ENCODE measurements at regions of chr7 and their contacts with region 1.

Region 1: DNA sequence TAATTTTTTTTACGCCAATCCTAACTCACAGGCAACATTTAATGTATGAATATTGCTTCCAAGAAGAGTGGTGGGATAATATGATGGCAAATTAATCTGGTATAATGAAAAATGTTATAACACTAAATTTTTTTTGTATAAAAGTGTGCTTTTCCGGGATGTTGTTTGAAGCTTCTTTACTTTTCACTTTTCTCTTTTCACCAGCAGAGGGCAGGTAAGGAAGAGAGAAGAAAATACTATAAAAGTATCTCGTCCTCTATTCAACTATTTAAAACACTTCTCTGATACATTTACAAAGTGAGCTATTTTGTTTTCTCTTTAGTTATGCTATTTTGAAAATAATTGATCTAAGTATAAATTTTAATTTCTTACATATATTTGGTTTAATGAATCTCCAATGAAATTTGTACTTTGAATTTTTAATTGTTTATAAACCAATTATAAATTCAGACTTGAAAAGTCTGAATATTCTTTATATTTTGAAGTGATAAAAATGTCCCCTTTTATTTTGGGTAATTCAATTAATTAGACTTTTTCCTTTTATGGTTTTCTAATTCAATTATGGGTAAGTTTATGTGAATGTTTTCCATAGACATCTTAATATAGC is 20.7 kb upstream of the CFTR start:
- DNase-seq: peak in 1 of 2 experiments; percentile 17
- ATAC-seq: peak in 1 of 2 experiments; percentile 63; a peak in 2 of 6 replicates
- H3K4me3 ChIP-seq: no peak overlapping the region
- H3K27ac ChIP-seq: no peak overlapping the region
- H3K4me1 ChIP-seq: no peaks in the 10 kb centered on the region
- CTCF ChIP-seq: peak; percentile 74
- EP300 ChIP-seq: no peak
- POLR2A ChIP-seq: no peak
- RAD21 ChIP-seq: peak; percentile 76 to 83

Region 2: GRCh38 chr7:117325836-117326235 is 133.2 kb before region 1 on chr7:
- CTCF ChIA-PET with region 1: no interaction called
- POLR2A ChIA-PET with region 1: no interaction called
- DNase-seq: no peak
- ATAC-seq: no peak
- H3K4me3 ChIP-seq: no peak overlapping the region
- H3K27ac ChIP-seq: no peak overlapping the region
- H3K4me1 ChIP-seq: peaks cover 10% of the 10 kb centered on the region; the same call in 1 of the 3 replicates
- CTCF ChIP-seq: no peak
- EP300 ChIP-seq: no peak
- POLR2A ChIP-seq: no peak
- RAD21 ChIP-seq: no peak

Region 3: GRCh38 chr7:117479225-117480054 is 20.4 kb after region 1 on chr7 and contains the start of gene CFTR:
- CTCF ChIA-PET with region 1: interaction called, 10 read pairs
- POLR2A ChIA-PET with region 1: no interaction called
- DNase-seq: peak; percentile 2 to 5
- ATAC-seq: peak; percentile 79 to 84
- H3K4me3 ChIP-seq: peak within 1 kb of the TSS; percentile 47
- H3K27ac ChIP-seq: peak within 1 kb of the TSS; percentile 54 to 75; a peak in 5 of 6 replicates
- H3K4me1 ChIP-seq: 0 out of 3 replicates have a peak, but pooled peaks cover 7% of the 10 kb centered on the region
- CTCF ChIP-seq: no peak
- EP300 ChIP-seq: no peak
- POLR2A ChIP-seq: no peak
- RAD21 ChIP-seq: no peak
- polyA plus RNA-seq, gene CFTR: 0.31 and 0.36 TPM in 2 replicates

Region 4: GRCh38 chr7:117673839-117674238 is 214.8 kb after region 1 on chr7:
- CTCF ChIA-PET with region 1: interaction called, 18 read pairs
- POLR2A ChIA-PET with region 1: no interaction called
- DNase-seq: peak; percentile 20 to 60
- ATAC-seq: peak; percentile 74 to 90; a peak in 5 of 6 replicates
- H3K4me3 ChIP-seq: no peak overlapping the region
- H3K27ac ChIP-seq: peak overlapping the region; percentile 21 to 66; a peak in 3 of 6 replicates
- H3K4me1 ChIP-seq: peaks cover 24% of the 10 kb centered on the region
- CTCF ChIP-seq: peak; percentile 62
- EP300 ChIP-seq: no peak
- POLR2A ChIP-seq: no peak
- RAD21 ChIP-seq: peak; percentile 61 to 71